ENCODE measurements at regions of chr7 and their contacts with region 1.

Region 1: DNA sequence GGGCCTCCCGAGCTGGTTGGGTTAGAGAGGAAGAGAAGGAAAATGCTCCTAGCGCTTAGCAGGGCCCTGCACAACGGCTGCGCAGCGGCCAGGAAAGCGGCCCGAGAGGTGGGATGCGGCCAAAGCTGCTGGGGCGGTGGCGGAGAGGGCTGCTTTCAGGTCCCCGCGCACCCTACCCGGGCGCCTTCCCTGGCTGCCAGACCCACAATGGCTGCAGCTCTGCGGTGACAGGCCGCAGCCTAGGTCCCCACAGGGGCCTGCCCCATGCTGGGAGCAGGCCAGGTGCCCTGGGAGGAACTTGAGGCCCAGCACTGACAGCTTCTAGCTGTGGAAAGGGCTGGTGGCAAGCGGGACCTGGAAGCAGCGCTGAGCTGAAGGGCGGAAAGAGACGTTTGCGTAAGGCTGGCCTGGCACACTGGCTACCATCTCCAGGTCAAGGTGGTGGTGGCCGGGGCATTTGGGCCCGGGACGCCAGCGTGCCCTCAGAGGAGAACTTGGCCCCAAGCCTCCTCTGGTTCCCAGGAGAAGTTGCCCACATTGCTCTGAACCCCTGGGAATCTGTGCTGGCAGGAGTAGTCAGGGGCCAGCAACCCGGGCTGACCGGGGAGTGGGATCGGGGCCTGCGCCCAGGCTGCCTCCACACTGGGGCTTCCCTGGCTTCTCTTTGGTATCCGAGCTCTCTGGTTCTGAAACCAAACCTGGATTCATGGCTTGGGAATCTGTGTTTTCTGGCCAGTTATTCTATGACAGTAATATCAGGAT is 72.9 kb upstream of the ZNF804B start:
- DNase-seq: no peak
- H3K4me3 ChIP-seq: no peak overlapping the region
- H3K27ac ChIP-seq: no peak overlapping the region
- H3K4me1 ChIP-seq: peaks cover 19% of the 10 kb centered on the region
- H3K27me3 ChIP-seq: no peaks in the 10 kb centered on the region
- CTCF ChIP-seq: no peak
- POLR2A ChIP-seq: no peak

Region 2: DNA sequence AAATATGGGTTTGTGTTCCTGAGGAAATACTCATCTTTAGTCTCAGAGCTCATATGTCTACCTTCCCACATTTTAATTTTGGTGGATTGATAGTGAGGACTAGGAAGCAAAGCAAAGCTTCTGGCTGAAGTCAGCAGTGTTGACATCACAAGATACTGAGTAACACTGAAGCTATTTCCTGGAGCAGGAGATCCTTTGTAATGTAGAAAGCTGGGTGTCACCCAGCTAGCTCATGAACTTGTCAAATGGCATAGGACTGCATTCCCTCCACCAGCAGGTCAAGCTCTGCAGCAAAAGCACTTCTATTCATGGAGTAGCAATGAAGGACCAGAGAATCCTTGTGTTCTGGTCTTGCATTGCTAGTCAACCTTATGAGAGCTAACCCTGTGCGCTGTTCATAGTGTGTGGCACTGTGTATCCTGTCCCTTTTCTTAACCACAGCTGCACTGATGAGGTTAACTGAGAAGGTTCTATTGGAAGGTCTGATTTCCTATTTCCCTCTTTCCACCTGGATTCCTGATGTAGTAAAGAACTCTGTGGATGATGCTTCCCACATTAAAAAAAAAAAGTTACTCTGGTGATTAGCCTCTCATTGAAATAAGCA is 21.9 kb before region 1 on chr7:
- CTCF ChIA-PET with region 1: interaction called, 3 read pairs
- POLR2A ChIA-PET with region 1: interaction called, 3 read pairs
- dilution Hi-C with region 1: no loop called
- intact Hi-C with region 1: loop called (anchors 2 kb)
- DNase-seq: peak; percentile 88
- H3K4me3 ChIP-seq: no peak overlapping the region
- H3K27ac ChIP-seq: peak overlapping the region; percentile 71
- H3K4me1 ChIP-seq: peaks cover 14% of the 10 kb centered on the region
- H3K27me3 ChIP-seq: no peaks in the 10 kb centered on the region
- CTCF ChIP-seq: no peak
- POLR2A ChIP-seq: no peak

Region 3: GRCh38 chr7:90351987-90352386 is 1665.3 kb after region 1 on chr7:
- CTCF ChIA-PET with region 1: no interaction called
- POLR2A ChIA-PET with region 1: no interaction called
- dilution Hi-C with region 1: no loop called
- intact Hi-C with region 1: loop called (anchors 5 kb)
- DNase-seq: no peak
- H3K4me3 ChIP-seq: no peak overlapping the region
- H3K27ac ChIP-seq: no peak overlapping the region
- H3K4me1 ChIP-seq: peaks cover 5% of the 10 kb centered on the region
- H3K27me3 ChIP-seq: no peaks in the 10 kb centered on the region
- CTCF ChIP-seq: no peak
- POLR2A ChIP-seq: no peak